Posterior cingulate gyrus (tissue), 11 donors: ENCODE measurements at regions of chr16 and their contacts with region 1.

Region 1: GRCh38 chr16:15765880-15766279 is 90.9 kb downstream of the MYH11 start:
- DNase-seq: peak in 5 of 10 donors; percentile 18 to 75 (median 31)

Region 2: GRCh38 chr16:15592324-15592723 is 173.6 kb before region 1 on chr16:
- intact Hi-C with region 1: no loop called
- DNase-seq: no peak

Region 3: DNA sequence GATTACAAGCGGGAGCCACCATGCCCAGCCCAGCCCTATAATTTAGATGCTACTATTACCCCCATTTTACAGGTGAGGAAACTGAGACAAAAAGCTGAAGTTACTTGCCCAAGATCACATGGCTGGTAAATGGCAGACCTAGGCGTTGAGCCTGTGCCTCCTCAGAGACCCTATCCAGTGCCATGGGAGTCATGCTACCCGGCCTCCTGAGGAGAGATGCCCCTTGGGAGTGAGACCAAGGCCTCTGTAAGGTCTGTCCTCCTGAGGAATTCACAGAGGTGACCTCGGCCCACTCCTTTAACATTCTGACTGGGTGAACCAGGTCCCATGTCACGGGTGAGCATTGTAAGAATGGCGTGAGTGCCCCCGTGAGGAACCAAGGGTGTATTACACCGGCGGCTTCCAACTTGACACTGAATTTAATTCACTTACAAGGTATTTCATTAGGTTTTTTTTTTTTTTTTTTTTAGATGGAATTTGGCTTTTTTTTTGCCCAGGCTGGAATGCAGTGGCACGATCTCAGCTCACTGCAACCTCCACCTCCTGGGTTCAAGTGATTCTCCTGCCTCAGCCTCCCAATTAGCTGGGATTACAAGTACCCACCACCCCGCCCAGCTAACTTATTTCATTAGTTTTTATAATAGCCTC is 361.7 kb after region 1 on chr16:
- intact Hi-C with region 1: loop called (anchors 5 kb)
- DNase-seq: peak; percentile 31 to 92 (median 64)

Region 4: DNA sequence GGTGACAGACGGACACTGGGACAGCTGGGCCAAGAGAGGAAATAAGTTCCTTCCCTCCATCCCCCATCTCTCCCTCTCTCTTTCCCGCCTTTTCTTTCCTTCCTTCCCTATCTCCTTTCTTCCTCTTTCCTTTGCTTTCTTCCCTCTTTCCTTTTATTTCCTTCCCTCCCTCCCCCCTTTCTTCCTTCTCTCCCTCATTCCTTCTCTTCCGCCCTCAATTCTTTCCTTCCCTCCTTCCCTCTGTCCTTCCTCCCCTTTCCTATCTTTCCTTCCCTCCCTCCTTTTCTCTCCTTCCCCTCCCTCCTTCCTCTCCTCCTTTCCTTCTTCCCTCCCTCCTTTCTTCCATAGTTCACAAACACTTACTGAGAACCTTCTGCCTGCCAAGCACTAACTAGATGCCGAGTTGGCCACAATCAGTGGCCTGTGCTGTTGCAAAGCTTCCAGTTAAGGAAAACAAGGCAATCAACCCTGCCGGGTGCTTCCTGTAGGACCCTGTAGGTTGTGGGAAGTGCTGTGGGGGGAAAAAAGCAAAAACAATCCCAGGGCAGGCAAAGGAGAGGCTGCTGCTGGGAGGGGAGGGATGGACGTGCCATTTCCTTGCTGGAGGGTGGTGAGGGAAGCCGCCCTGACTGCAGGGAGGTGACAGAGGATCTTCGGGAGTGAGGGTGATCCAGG is 425.8 kb after region 1 on chr16:
- intact Hi-C with region 1: loop called (anchors 1 kb)
- DNase-seq: no peak